HCT116 (cell line): ENCODE measurements at regions of chr2 and their contacts with region 1.

Region 1: GRCh38 chr2:38274286-38275276 is 102.5 kb downstream of the ATL2 start:
- DNase-seq: peak; percentile 79
- ATAC-seq: peak; percentile 92
- H3K4me3 ChIP-seq: no peak overlapping the region
- H3K27ac ChIP-seq: no peak overlapping the region
- H3K4me1 ChIP-seq: no peaks in the 10 kb centered on the region
- H3K27me3 ChIP-seq: no peaks in the 10 kb centered on the region
- CTCF ChIP-seq: peak; percentile 37 to 78 (median 72); a peak in 5 of 6 replicates
- POLR2A ChIP-seq: no peak
- RAD21 ChIP-seq: peak; percentile 93

Region 2: GRCh38 chr2:37877457-37878315 is 396.9 kb before region 1 on chr2:
- CTCF ChIA-PET with region 1: interaction called, 10 read pairs
- POLR2A ChIA-PET with region 1: no interaction called
- RAD21 ChIA-PET with region 1: no interaction called
- intact Hi-C with region 1: no loop called
- DNase-seq: peak; percentile 35
- ATAC-seq: peak; percentile 84
- H3K4me3 ChIP-seq: no peak overlapping the region
- H3K27ac ChIP-seq: no peak overlapping the region
- H3K4me1 ChIP-seq: no peaks in the 10 kb centered on the region
- H3K27me3 ChIP-seq: no peaks in the 10 kb centered on the region
- CTCF ChIP-seq: peak; percentile 45 to 76 (median 66); a peak in 5 of 6 replicates
- POLR2A ChIP-seq: no peak
- RAD21 ChIP-seq: peak; percentile 88

Region 3: GRCh38 chr2:37925063-37925897 is 349.3 kb before region 1 on chr2 and contains the start of gene RMDN2:
- CTCF ChIA-PET with region 1: interaction called, 5 read pairs
- POLR2A ChIA-PET with region 1: no interaction called
- RAD21 ChIA-PET with region 1: no interaction called
- intact Hi-C with region 1: loop called (anchors 1 kb)
- DNase-seq: peak; percentile 81
- ATAC-seq: peak; percentile 92
- H3K4me3 ChIP-seq: peak within 1 kb of the TSS; percentile 61 to 68
- H3K27ac ChIP-seq: peak within 1 kb of the TSS; percentile 60
- H3K4me1 ChIP-seq: peaks cover 0 to 6% of the 10 kb centered on the region in 2 experiments; a peak in 2 of 4 replicates
- H3K27me3 ChIP-seq: no peaks in the 10 kb centered on the region
- CTCF ChIP-seq: no peak; a peak in 1 of 6 replicates
- POLR2A ChIP-seq: peak; percentile 67
- RAD21 ChIP-seq: no peak
- total RNA-seq, gene RMDN2: 4.5 TPM

Region 4: DNA sequence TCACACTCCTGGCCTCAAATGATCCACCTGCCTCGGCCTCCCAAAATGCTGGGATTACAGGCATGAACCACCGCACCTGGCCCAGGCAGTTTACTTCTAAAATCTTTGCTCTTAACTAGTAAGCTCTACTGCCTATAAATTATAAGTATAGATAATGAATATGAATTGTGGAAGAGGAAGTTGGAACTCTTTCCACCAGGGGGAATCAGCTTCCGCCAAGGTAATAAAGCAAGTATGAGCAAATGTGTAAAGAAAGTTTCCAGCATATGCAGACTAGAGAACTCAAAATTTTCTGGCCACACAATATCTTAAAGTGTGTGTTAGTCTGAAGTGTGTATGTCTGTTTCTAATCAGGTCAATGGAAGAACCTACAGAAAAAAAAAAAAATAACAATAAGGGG is 281.4 kb before region 1 on chr2:
- CTCF ChIA-PET with region 1: interaction called, 26 read pairs
- POLR2A ChIA-PET with region 1: no interaction called
- RAD21 ChIA-PET with region 1: interaction called in 1 of 2 experiments, 3 read pairs
- intact Hi-C with region 1: no loop called
- DNase-seq: no peak
- ATAC-seq: 0 out of 2 replicates have a peak, but pooled peaks have one; percentile 32
- H3K4me3 ChIP-seq: no peak overlapping the region
- H3K27ac ChIP-seq: no peak overlapping the region
- H3K4me1 ChIP-seq: no peaks in the 10 kb centered on the region
- H3K27me3 ChIP-seq: no peaks in the 10 kb centered on the region
- CTCF ChIP-seq: peak; percentile 36 to 37 (median 36); a peak in 4 of 6 replicates
- POLR2A ChIP-seq: no peak
- RAD21 ChIP-seq: peak; percentile 44

Region 5: GRCh38 chr2:38115216-38116032 is 159.2 kb before region 1 on chr2:
- CTCF ChIA-PET with region 1: interaction called, 6 read pairs
- POLR2A ChIA-PET with region 1: no interaction called
- RAD21 ChIA-PET with region 1: interaction called, 3 to 4 read pairs
- intact Hi-C with region 1: loop called (anchors 1 kb)
- DNase-seq: peak; percentile 59
- ATAC-seq: peak; percentile 97
- H3K4me3 ChIP-seq: no peak overlapping the region
- H3K27ac ChIP-seq: no peak overlapping the region
- H3K4me1 ChIP-seq: no peaks in the 10 kb centered on the region
- H3K27me3 ChIP-seq: no peaks in the 10 kb centered on the region
- CTCF ChIP-seq: peak; percentile 84 to 99 (median 97)
- POLR2A ChIP-seq: no peak
- RAD21 ChIP-seq: peak; percentile 84

Region 6: GRCh38 chr2:38535744-38536506 is 261.3 kb after region 1 on chr2:
- CTCF ChIA-PET with region 1: no interaction called
- POLR2A ChIA-PET with region 1: no interaction called
- RAD21 ChIA-PET with region 1: no interaction called
- intact Hi-C with region 1: no loop called
- DNase-seq: peak; percentile 37
- ATAC-seq: peak; percentile 96
- H3K4me3 ChIP-seq: peak overlapping the region; percentile 47 to 54
- H3K27ac ChIP-seq: no peak overlapping the region
- H3K4me1 ChIP-seq: peaks cover 14% of the 10 kb centered on the region in 2 experiments; a peak in 3 of 4 replicates
- H3K27me3 ChIP-seq: no peaks in the 10 kb centered on the region
- CTCF ChIP-seq: peak; percentile 81 to 84 (median 82)
- POLR2A ChIP-seq: no peak
- RAD21 ChIP-seq: peak; percentile 88